ENCODE measurements at regions of chr19 and their contacts with region 1.

Region 1: GRCh38 chr19:984165-984967 is at the start of gene WDR18:
- DNase-seq: peak; percentile 94 to 96
- H3K4me3 ChIP-seq: peak within 1 kb of the TSS; percentile 51 to 98 (median 97)
- H3K27ac ChIP-seq: peak within 1 kb of the TSS; percentile 77 to 87 (median 82)
- H3K4me1 ChIP-seq: peaks cover 10 to 20% of the 10 kb centered on the region in 2 donors
- H3K27me3 ChIP-seq: no peaks in the 10 kb centered on the region
- CTCF ChIP-seq: peak in 3 of 6 experiments; percentile 30 to 40 (median 37)
- POLR2A ChIP-seq: peak in 1 of 2 donors; percentile 70
- total RNA-seq, gene WDR18: 15.2 to 73.5 (median 46.8) TPM

Region 2: DNA sequence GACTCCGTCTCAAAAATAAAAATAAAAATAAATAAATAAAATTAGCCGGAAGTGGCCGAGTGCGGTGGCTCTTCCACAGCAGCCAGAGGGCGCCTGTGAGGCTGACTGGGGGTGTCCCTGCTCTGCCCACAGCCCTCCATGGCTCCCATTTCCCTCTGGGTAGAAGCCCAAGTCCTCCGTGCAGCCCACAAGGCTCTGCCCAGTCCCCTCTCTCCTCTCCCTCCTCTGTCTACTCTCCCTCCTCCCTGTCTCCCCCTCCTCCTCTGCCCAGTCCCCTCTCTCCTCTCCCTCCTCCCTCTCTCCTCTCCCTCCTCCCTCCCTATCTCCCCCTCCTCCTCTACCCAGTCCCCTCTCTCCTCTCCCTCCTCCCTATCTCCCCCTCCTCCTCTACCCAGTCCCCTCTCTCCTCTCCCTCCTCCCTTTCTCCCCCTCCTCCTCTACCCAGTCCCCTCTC is 213.0 kb before region 1 on chr19:
- intact Hi-C with region 1: loop called (anchors 5 kb)
- DNase-seq: peak in 1 of 2 donors; percentile 39
- H3K4me3 ChIP-seq: no peak overlapping the region
- H3K27ac ChIP-seq: no peak overlapping the region
- H3K4me1 ChIP-seq: peaks cover 9 to 21% of the 10 kb centered on the region in 2 donors
- H3K27me3 ChIP-seq: no peaks in the 10 kb centered on the region
- CTCF ChIP-seq: peak in 1 of 6 experiments; percentile 51
- POLR2A ChIP-seq: no peak

Region 3: DNA sequence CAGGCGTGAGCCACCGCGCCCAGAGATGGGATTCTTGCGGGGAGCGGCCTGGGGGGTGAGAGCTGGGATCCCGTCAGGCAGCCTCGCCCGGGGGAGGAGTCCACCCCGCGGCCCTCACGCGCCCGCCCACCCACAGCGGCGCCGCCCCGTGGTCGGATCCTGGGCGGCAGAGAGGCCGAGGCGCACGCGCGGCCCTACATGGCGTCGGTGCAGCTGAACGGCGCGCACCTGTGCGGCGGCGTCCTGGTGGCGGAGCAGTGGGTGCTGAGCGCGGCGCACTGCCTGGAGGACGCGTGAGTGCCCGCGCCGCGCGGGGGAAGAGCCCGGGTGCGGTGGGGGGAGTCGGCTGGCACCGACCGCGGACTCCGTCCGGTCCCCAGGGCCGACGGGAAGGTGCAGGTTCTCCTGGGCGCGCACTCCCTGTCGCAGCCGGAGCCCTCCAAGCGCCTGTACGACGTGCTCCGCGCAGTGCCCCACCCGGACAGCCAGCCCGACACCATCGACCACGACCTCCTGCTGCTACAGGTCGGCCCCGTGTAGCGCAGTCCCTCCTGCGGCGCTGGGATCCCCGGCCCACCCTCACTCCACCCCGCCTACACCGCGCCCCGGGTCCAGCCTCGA is 123.8 kb before region 1 on chr19:
- intact Hi-C with region 1: loop called (anchors 5 kb)
- DNase-seq: peak; percentile 68 to 70
- H3K4me3 ChIP-seq: peak overlapping the region in 1 of 3 donors; percentile 34
- H3K27ac ChIP-seq: peak overlapping the region in 1 of 3 donors; percentile 53
- H3K4me1 ChIP-seq: peaks cover 4 to 6% of the 10 kb centered on the region in 2 donors
- H3K27me3 ChIP-seq: no peaks in the 10 kb centered on the region
- CTCF ChIP-seq: peak in 2 of 6 experiments; percentile 28 to 29
- POLR2A ChIP-seq: peak in 1 of 2 donors; percentile 40

Region 4: GRCh38 chr19:917323-918151 is 66.8 kb before region 1 on chr19 and contains the start of gene KISS1R:
- intact Hi-C with region 1: loop called (anchors 2 kb)
- DNase-seq: no peak
- H3K4me3 ChIP-seq: peak within 1 kb of the TSS in 1 of 3 donors; percentile 10
- H3K27ac ChIP-seq: no peak within 1 kb of the TSS
- H3K4me1 ChIP-seq: peaks cover 27 to 42% of the 10 kb centered on the region in 2 donors
- H3K27me3 ChIP-seq: peaks cover 30% of the 10 kb centered on the region
- CTCF ChIP-seq: peak in 2 of 6 experiments; percentile 32 to 33
- POLR2A ChIP-seq: no peak
- total RNA-seq, gene KISS1R: not detected